Right ventricle myocardium superior (tissue), 1 donor: ENCODE measurements at regions of chr12 and their contacts with region 1.

Region 1: DNA sequence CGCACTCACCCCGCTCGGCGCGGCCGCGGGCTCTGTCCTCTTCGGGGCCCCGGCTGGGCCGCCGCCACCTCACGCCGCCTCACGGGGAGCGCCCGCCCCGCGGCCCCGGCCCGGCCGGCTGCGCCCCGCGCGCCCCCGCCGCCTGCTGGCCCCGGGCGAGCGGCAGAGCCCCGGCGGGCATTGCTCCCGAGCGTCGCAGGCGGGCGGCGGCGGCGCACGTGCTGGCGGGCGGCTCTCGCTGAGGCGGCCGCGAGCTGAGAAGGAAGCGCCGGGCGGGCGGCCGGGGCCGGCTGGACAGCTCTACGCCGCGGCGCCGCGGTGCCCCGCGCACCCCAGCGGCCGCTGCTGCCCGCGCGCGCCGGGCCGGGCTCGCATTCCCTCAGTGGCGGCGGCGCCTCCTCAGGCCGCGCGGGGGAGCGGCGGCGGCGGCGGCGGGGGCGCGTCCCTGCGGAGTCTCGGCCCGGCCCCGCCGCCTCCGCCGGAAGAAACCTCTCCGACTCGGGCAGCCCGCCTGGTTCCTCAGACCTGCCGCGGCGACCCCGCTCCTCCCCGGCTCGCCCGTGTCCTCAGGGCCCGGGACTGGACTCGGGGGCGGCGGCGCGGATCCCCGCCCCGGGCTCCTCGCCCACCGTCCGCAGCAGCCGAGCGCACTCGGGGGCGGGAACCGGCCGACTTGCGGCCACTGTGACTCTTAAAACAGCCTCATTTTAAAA is at the start of gene PITPNM2:
- DNase-seq: peak; percentile 78
- ATAC-seq: peak; percentile 91
- total RNA-seq, gene PITPNM2: 17.0 TPM

Region 2: DNA sequence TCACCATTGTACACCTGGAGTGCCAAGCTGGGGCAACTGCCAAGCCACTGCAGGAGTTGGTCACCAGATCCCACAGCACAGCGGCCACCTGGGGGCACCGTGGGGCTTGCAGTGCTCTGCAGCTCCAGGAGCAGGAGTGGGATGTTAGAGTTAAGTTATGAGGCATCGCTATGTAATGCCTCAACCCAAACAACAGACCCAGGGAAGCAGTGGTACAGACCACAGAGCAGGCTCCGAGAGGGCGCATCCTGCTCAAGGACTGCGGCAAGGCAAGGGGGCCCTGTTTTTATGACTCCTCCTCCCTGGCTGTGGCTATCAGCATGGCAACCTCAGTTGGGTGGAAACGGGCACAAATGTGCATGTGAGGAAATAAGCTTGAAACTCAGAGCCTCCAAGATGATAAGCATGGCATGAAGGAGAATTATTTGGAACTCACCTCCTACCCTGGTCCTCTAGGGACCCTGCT is 107.3 kb before region 1 on chr12:
- intact Hi-C with region 1: loop called (anchors 5 kb)
- DNase-seq: peak; percentile 90
- ATAC-seq: peak; percentile 96

Region 3: GRCh38 chr12:123056053-123056741 is 94.7 kb before region 1 on chr12:
- intact Hi-C with region 1: loop called (anchors 5 kb)
- DNase-seq: no peak
- ATAC-seq: no peak